Right lobe of liver (tissue), 6 donors: ENCODE measurements at regions of chr7 and their contacts with region 1.

Region 1: GRCh38 chr7:121752706-121753105 is 120.3 kb upstream of the PTPRZ1 start:
- DNase-seq: no peak
- ATAC-seq: peak in 3 of 4 donors; percentile 37 to 50 (median 43)
- H3K4me3 ChIP-seq: no peak overlapping the region
- H3K27ac ChIP-seq: no peak overlapping the region
- H3K4me1 ChIP-seq: no peaks in the 10 kb centered on the region
- H3K27me3 ChIP-seq: no peaks in the 10 kb centered on the region
- CTCF ChIP-seq: peak; percentile 18 to 40 (median 31)
- POLR2A ChIP-seq: no peak

Region 2: GRCh38 chr7:121994625-121995410 is 242.1 kb after region 1 on chr7:
- intact Hi-C with region 1: loop called in 1 of 2 experiments (anchors 10 kb)
- DNase-seq: peak in 2 of 3 donors; percentile 40 to 54
- ATAC-seq: peak; percentile 91 to 97 (median 94)
- H3K4me3 ChIP-seq: no peak overlapping the region
- H3K27ac ChIP-seq: no peak overlapping the region
- H3K4me1 ChIP-seq: no peaks in the 10 kb centered on the region
- H3K27me3 ChIP-seq: no peaks in the 10 kb centered on the region
- CTCF ChIP-seq: peak; percentile 37 to 59 (median 53)
- POLR2A ChIP-seq: no peak